ENCODE measurements at regions of chr7 and their contacts with region 1.

Region 1: GRCh38 chr7:86978808-86979506 is 80.5 kb downstream of the ELAPOR2 start:
- DNase-seq: peak; percentile 74 to 89 (median 84)
- H3K4me3 ChIP-seq: no peak overlapping the region
- H3K4me3 Mint-ChIP-seq: peak overlapping the region in 6 of 8 donors; percentile 30 to 74 (median 44)
- H3K27ac ChIP-seq: peak overlapping the region; percentile 65
- H3K27ac Mint-ChIP-seq: peak overlapping the region; percentile 87 to 98 (median 95)
- H3K4me1 ChIP-seq: peaks cover 34% of the 10 kb centered on the region
- H3K4me1 Mint-ChIP-seq: peaks cover 28 to 55% (median 44%) of the 10 kb centered on the region in 4 donors
- H3K27me3 ChIP-seq: no peaks in the 10 kb centered on the region
- H3K27me3 Mint-ChIP-seq: no peaks in the 10 kb centered on the region

Region 2: GRCh38 chr7:86793136-86793535 is 185.8 kb before region 1 on chr7:
- CTCF ChIA-PET with region 1: no interaction called
- POLR2A ChIA-PET with region 1: no interaction called
- intact Hi-C with region 1: no loop called
- DNase-seq: no peak
- H3K4me3 ChIP-seq: no peak overlapping the region
- H3K4me3 Mint-ChIP-seq: no peak overlapping the region
- H3K27ac ChIP-seq: no peak overlapping the region
- H3K27ac Mint-ChIP-seq: no peak overlapping the region
- H3K4me1 ChIP-seq: no peaks in the 10 kb centered on the region
- H3K4me1 Mint-ChIP-seq: no peaks in the 10 kb centered on the region
- H3K27me3 ChIP-seq: no peaks in the 10 kb centered on the region
- H3K27me3 Mint-ChIP-seq: no peaks in the 10 kb centered on the region

Region 3: DNA sequence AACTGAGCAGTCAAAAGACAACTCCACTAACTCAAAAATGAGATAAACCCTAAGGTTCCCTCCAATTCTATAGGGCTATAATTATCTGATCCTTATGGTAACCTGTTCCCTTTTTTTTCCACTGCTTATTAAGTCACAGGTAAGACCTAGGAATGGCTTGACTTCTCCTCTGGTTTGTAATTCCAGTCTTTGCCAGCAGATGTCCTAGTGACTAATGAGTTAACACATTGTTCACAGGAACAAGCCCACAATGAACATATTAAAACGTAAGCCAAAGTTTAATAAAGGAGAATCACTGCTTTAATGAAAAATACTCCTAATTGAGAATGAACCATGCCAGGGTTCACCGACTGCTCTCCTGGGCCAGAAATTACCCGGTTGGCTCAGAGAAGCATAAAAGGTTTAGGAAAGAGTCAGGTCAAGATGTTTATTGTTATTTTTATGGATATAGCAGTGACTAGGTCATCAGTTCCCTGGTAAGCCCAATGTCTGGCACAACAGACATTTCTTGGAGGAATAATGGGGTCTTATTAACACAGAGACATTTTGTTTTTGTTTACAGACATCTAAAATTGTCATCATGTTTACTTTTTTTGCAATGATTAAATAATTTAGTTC is 39.7 kb before region 1 on chr7:
- CTCF ChIA-PET with region 1: interaction called, 3 read pairs
- POLR2A ChIA-PET with region 1: no interaction called
- intact Hi-C with region 1: loop called (anchors 2 kb)
- DNase-seq: peak; percentile 40 to 62 (median 52)
- H3K4me3 ChIP-seq: no peak overlapping the region
- H3K4me3 Mint-ChIP-seq: no peak overlapping the region
- H3K27ac ChIP-seq: no peak overlapping the region
- H3K27ac Mint-ChIP-seq: peak overlapping the region in 2 of 7 donors; percentile 75 to 85
- H3K4me1 ChIP-seq: no peaks in the 10 kb centered on the region
- H3K4me1 Mint-ChIP-seq: peaks cover 0 to 4% (median 3%) of the 10 kb centered on the region in 4 donors
- H3K27me3 ChIP-seq: no peaks in the 10 kb centered on the region
- H3K27me3 Mint-ChIP-seq: peaks cover 0 to 2% of the 10 kb centered on the region in 2 donors

Region 4: GRCh38 chr7:86955895-86956503 is 23.0 kb before region 1 on chr7:
- CTCF ChIA-PET with region 1: no interaction called
- POLR2A ChIA-PET with region 1: no interaction called
- intact Hi-C with region 1: loop called (anchors 2 kb)
- DNase-seq: no peak
- H3K4me3 ChIP-seq: no peak overlapping the region
- H3K4me3 Mint-ChIP-seq: no peak overlapping the region
- H3K27ac ChIP-seq: no peak overlapping the region
- H3K27ac Mint-ChIP-seq: peak overlapping the region in 2 of 7 donors; percentile 7 to 81
- H3K4me1 ChIP-seq: no peaks in the 10 kb centered on the region
- H3K4me1 Mint-ChIP-seq: peaks cover 0 to 1% (median 0%) of the 10 kb centered on the region in 4 donors
- H3K27me3 ChIP-seq: no peaks in the 10 kb centered on the region
- H3K27me3 Mint-ChIP-seq: peaks cover 0 to 1% of the 10 kb centered on the region in 2 donors

Region 5: DNA sequence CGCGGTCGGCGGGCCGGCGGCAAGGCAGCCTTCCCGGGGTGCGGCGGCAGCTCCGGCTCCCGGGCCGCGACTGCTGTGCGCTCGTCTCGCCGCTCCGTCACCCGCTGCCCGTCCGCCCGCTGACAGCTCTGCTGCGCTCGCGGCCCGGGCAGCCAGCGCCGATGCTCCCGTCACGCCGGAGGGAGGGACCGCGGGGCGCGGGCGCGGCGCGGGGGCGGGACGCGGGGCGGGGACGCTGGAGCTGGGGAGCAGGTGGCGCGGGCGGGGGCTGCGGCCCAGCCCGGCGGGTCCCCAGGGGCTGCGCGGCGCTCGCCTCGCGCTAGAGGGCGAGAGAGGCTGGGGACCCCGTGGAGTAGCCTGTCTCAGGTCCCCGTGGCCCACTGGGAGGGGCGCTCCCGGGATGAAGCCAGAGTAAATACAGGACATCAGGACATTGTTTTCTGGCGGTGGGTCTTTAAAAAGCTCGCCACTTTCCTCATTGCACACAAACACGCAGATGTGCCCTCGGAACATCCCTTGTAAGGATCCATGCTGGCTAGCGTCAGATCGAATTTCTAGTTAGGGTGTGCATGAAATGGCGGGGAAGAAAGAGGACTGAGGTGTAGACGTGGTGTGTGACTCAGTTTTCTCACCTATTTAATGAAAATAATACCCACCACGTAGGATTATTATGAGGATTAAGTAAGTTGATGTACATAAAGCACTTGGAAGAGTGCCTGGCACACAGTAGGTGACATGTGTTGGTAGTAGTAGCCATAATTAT is 80.7 kb after region 1 on chr7 and contains the start of gene ELAPOR2:
- CTCF ChIA-PET with region 1: interaction called, 7 read pairs
- POLR2A ChIA-PET with region 1: interaction called, 6 read pairs
- intact Hi-C with region 1: loop called (anchors 1 kb)
- DNase-seq: peak; percentile 81 to 83 (median 82)
- H3K4me3 ChIP-seq: peak within 1 kb of the TSS; percentile 59 to 70
- H3K4me3 Mint-ChIP-seq: peak within 1 kb of the TSS; percentile 83 to 91 (median 88)
- H3K27ac ChIP-seq: peak within 1 kb of the TSS; percentile 53
- H3K27ac Mint-ChIP-seq: peak within 1 kb of the TSS; percentile 45 to 93 (median 86)
- H3K4me1 ChIP-seq: peaks cover 14% of the 10 kb centered on the region
- H3K4me1 Mint-ChIP-seq: peaks cover 12 to 20% (median 15%) of the 10 kb centered on the region in 4 donors
- H3K27me3 ChIP-seq: no peaks in the 10 kb centered on the region
- H3K27me3 Mint-ChIP-seq: peaks cover 0 to 3% of the 10 kb centered on the region in 2 donors
- total RNA-seq, gene ELAPOR2: 8.8 to 11.8 TPM

Region 6: GRCh38 chr7:87199700-87200450 is 220.9 kb after region 1 on chr7:
- CTCF ChIA-PET with region 1: no interaction called
- POLR2A ChIA-PET with region 1: no interaction called
- intact Hi-C with region 1: no loop called
- DNase-seq: no peak
- H3K4me3 ChIP-seq: no peak overlapping the region
- H3K4me3 Mint-ChIP-seq: peak overlapping the region in 4 of 8 donors; percentile 6 to 54 (median 32)
- H3K27ac ChIP-seq: no peak overlapping the region
- H3K27ac Mint-ChIP-seq: peak overlapping the region; percentile 17 to 85 (median 64)
- H3K4me1 ChIP-seq: peaks cover 53% of the 10 kb centered on the region
- H3K4me1 Mint-ChIP-seq: peaks cover 45 to 67% (median 59%) of the 10 kb centered on the region in 4 donors
- H3K27me3 ChIP-seq: no peaks in the 10 kb centered on the region
- H3K27me3 Mint-ChIP-seq: no peaks in the 10 kb centered on the region

Region 7: DNA sequence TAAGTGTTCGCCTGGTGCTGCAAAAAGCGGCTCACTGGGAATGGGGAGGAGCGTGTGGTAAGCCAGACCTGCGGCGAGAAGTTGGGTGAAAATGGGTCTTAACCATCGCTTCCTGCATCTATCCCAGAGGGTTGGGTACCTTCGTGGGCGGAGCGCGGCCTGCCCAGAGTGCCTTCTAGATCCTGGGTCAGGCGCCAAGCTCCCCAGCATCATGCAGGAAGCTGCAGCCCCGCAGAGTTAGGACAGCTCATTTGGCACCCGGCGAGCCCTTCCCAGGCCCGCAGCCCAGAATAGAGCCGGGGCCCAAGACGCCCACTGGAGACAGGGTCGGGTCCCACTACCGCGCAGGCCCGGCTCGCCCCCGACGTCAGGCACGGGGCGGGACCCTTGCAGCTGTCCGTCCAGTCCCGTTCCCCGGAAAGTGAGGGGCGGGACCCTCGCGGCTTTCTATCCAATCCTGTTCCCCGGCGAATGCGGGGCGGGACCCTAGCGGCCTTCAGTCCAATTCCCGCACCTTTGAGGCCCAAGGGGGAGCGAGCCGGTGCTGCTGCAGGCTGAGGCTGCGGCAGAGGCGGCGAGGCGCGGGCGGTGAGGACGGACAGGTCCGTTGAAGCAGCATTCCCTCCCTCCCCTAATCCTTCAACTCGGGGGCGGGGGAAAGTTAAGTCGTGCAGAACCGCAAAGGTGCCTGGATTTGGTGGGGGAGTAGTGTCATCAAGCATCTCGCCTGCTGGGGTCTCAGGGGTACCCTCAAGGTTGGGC is 366.4 kb after region 1 on chr7 and contains the start of gene CROT:
- CTCF ChIA-PET with region 1: no interaction called
- POLR2A ChIA-PET with region 1: interaction called, 3 read pairs
- intact Hi-C with region 1: loop called (anchors 10 kb)
- DNase-seq: peak; percentile 91 to 94 (median 92)
- H3K4me3 ChIP-seq: peak within 1 kb of the TSS; percentile 13 to 73
- H3K4me3 Mint-ChIP-seq: peak within 1 kb of the TSS; percentile 89 to 97 (median 96)
- H3K27ac ChIP-seq: peak within 1 kb of the TSS; percentile 80
- H3K27ac Mint-ChIP-seq: peak within 1 kb of the TSS; percentile 94 to 98 (median 95)
- H3K4me1 ChIP-seq: peaks cover 44% of the 10 kb centered on the region
- H3K4me1 Mint-ChIP-seq: peaks cover 33 to 57% (median 46%) of the 10 kb centered on the region in 4 donors
- H3K27me3 ChIP-seq: no peaks in the 10 kb centered on the region
- H3K27me3 Mint-ChIP-seq: no peaks in the 10 kb centered on the region
- total RNA-seq, gene CROT: 17.8 to 19.0 TPM